ENCODE measurements at regions of chr3 and their contacts with region 1.

Region 1: GRCh38 chr3:57597122-57597923 is at the start of gene ARF4:
- DNase-seq: peak; percentile 100
- H3K4me3 ChIP-seq: peak within 1 kb of the TSS; percentile 82 to 93 (median 86)
- H3K27ac ChIP-seq: peak within 1 kb of the TSS; percentile 99
- H3K4me1 ChIP-seq: peaks cover 34% of the 10 kb centered on the region
- H3K27me3 ChIP-seq: no peaks in the 10 kb centered on the region
- CTCF ChIP-seq: peak in 1 of 2 donors; percentile 41
- POLR2A ChIP-seq: peak; percentile 98
- total RNA-seq, gene ARF4: 243 and 249 TPM in 2 replicates

Region 2: GRCh38 chr3:56862352-56863074 is 734.8 kb before region 1 on chr3:
- CTCF ChIA-PET with region 1: no interaction called
- POLR2A ChIA-PET with region 1: no interaction called
- dilution Hi-C with region 1: no loop called
- intact Hi-C with region 1: no loop called
- DNase-seq: peak; percentile 76
- H3K4me3 ChIP-seq: no peak overlapping the region
- H3K27ac ChIP-seq: no peak overlapping the region
- H3K4me1 ChIP-seq: peaks cover 7% of the 10 kb centered on the region
- H3K27me3 ChIP-seq: no peaks in the 10 kb centered on the region
- CTCF ChIP-seq: no peak
- POLR2A ChIP-seq: no peak

Region 3: GRCh38 chr3:57227204-57227929 is 370.0 kb before region 1 on chr3 and contains the start of gene APPL1:
- CTCF ChIA-PET with region 1: no interaction called
- POLR2A ChIA-PET with region 1: no interaction called
- dilution Hi-C with region 1: no loop called
- intact Hi-C with region 1: loop called (anchors 5 kb)
- DNase-seq: peak; percentile 94
- H3K4me3 ChIP-seq: peak within 1 kb of the TSS; percentile 85 to 98 (median 88)
- H3K27ac ChIP-seq: peak within 1 kb of the TSS; percentile 75
- H3K4me1 ChIP-seq: peaks cover 18% of the 10 kb centered on the region
- H3K27me3 ChIP-seq: no peaks in the 10 kb centered on the region
- CTCF ChIP-seq: no peak
- POLR2A ChIP-seq: peak; percentile 84
- total RNA-seq, gene APPL1: 28.8 and 29.7 TPM in 2 replicates

Region 4: DNA sequence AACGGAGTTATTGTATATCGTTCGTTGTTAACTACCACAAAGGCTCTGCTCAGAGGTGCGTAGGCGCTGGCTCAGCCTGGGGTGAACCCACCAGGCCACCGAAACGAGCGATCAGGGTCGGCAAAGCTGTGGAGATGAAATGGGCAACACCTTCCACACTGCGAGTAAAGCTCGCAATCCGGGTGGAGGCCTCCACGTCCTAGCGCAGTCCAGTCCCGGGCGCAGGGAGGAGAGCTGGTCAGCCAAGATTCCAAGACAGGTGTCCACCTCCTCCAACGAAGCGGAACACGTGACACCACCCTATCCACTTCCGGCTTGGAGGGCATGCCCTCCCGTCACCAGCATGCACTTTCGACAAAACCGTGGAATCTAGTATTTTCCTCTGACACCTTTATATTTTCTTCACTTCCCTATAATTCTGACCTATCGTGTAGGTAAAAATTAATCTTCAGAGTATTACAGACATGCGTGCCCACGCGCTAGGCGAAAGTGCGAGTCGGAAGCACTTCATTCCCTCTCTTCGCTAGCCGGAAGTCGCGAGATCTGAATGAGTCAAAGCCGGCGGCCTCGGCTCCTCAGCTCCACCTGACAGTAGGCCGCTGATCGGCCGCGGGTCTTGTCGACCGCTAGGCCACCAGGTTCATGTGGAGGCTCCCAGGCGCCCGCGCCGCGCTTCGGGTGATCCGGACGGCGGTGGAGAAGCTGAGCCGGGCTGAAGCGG is 41.4 kb before region 1 on chr3 and contains the start of gene PDE12:
- CTCF ChIA-PET with region 1: interaction called, 5 read pairs
- POLR2A ChIA-PET with region 1: interaction called, 11 read pairs
- dilution Hi-C with region 1: no loop called
- intact Hi-C with region 1: loop called (anchors 2 kb)
- DNase-seq: peak; percentile 89
- H3K4me3 ChIP-seq: peak within 1 kb of the TSS; percentile 44 to 84 (median 48)
- H3K27ac ChIP-seq: peak within 1 kb of the TSS; percentile 81
- H3K4me1 ChIP-seq: peaks cover 16% of the 10 kb centered on the region
- H3K27me3 ChIP-seq: no peaks in the 10 kb centered on the region
- CTCF ChIP-seq: no peak
- POLR2A ChIP-seq: peak; percentile 90
- total RNA-seq, gene PDE12: 19.0 and 20.4 TPM in 2 replicates

Region 5: GRCh38 chr3:57692259-57693147 is 95.2 kb after region 1 on chr3 and contains the start of gene DENND6A:
- CTCF ChIA-PET with region 1: no interaction called
- POLR2A ChIA-PET with region 1: no interaction called
- dilution Hi-C with region 1: no loop called
- intact Hi-C with region 1: loop called (anchors 1 kb)
- DNase-seq: peak; percentile 94
- H3K4me3 ChIP-seq: peak within 1 kb of the TSS; percentile 65 to 90 (median 68)
- H3K27ac ChIP-seq: peak within 1 kb of the TSS; percentile 82
- H3K4me1 ChIP-seq: peaks cover 12% of the 10 kb centered on the region
- H3K27me3 ChIP-seq: no peaks in the 10 kb centered on the region
- CTCF ChIP-seq: no peak
- POLR2A ChIP-seq: peak; percentile 93
- total RNA-seq, gene DENND6A: 25.0 and 31.0 TPM in 2 replicates

Region 6: DNA sequence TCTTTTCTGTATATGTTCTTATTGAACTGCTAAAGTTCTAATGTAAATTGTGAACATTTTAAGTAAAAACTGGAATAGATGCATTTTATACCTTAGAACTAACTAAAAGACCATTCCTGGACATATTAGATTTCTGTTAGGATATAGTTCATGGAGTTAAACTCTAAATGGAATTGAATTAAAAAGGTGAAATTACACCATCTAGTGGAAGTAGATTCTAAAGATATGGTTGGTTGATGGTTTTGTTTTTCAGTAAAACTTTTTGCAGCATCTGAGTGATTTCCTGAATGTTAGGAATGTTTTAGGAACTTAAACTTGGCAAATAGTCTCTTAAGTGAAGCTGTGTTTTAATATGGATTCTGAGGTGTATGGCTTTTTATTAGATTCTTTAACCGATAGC is 255.6 kb after region 1 on chr3:
- CTCF ChIA-PET with region 1: interaction called, 4 read pairs
- POLR2A ChIA-PET with region 1: no interaction called
- dilution Hi-C with region 1: no loop called
- intact Hi-C with region 1: loop called (anchors 2 kb)
- DNase-seq: peak; percentile 54
- H3K4me3 ChIP-seq: no peak overlapping the region
- H3K27ac ChIP-seq: no peak overlapping the region
- H3K4me1 ChIP-seq: no peaks in the 10 kb centered on the region
- H3K27me3 ChIP-seq: no peaks in the 10 kb centered on the region
- CTCF ChIP-seq: peak in 1 of 2 donors; percentile 6
- POLR2A ChIP-seq: no peak

Measured in endothelial cell of umbilical vein (primary cell).